Activated T-helper 1 cell treated with anti-CD3 and anti-CD28 coated beads, Interleukin-12 subunit alpha, Interleukin-12 subunit beta, Interleukin-2, Interleukin-4 antibody, amounts not matched to agents 30 ng/mL and 10 ng/mL and 1 ng/mL, durations not matched to agents 14 hours and 24 hours and 36 hours (primary cell): ENCODE measurements at regions of chr11 and their contacts with region 1.

Region 1: GRCh38 chr11:19076744-19077589 is 16.4 kb upstream of the MRGPRX2 start:
- DNase-seq: peak; percentile 49
- H3K4me3 Mint-ChIP-seq: no peak overlapping the region
- H3K27ac Mint-ChIP-seq: no peak overlapping the region
- H3K4me1 Mint-ChIP-seq: no peaks in the 10 kb centered on the region
- H3K27me3 Mint-ChIP-seq: peaks cover 9% of the 10 kb centered on the region

Region 2: DNA sequence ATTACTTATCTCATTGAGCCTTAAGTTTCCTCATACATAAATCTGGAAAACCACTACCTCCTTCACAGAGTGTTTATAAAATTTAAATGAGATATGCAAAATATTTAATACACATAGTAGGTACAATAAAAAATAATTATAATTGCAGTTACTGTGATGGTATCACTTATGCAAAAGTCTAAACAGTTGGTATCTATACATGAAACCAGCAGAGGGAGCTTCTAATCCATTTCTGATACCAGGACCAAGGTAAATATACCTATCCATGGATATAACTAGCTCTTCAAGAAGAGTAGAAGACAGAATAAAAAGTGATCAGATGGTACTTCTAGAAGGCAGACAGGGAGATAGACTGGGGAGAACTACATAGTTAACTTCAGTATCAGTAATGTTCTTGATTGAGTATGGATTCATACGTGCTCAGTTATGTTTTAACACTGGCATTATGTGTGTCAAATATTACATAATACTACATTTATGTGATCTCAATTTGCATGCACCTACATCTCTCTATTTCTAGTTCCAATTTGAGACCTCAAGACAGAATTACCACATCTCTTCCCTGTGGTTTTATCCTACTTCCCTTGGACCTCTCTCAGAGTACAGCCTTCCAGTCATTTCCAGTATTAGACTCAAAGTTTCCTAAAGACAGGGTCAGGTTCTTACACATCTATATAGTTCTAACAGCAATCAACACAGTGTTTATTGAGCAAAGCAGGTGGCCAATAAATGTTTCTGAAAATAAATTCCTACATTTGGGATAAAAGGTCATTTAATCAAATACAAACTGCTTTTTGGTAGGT is 536.6 kb before region 1 on chr11:
- intact Hi-C with region 1: no loop called
- DNase-seq: no peak
- H3K4me3 Mint-ChIP-seq: no peak overlapping the region
- H3K27ac Mint-ChIP-seq: no peak overlapping the region
- H3K4me1 Mint-ChIP-seq: peaks cover 8% of the 10 kb centered on the region
- H3K27me3 Mint-ChIP-seq: no peaks in the 10 kb centered on the region

Region 3: DNA sequence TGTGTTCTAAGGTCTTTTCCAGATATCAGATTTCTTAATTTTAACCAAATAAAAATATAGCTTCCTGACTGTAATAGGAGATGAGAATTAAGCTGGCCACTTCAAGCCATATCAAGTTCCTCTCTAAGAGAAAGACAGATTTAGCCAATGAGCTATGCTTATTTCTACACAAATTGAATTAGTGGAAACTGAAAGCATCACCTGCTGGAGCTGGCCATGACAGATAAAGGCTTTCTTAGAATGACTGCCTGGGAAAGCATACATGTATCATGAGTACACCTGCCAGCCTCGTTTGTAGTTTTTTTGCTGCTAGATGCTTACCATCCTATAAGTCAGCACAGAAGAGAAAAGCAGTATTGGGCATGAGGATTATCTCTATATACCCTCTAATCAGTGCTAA is 1136.8 kb after region 1 on chr11:
- intact Hi-C with region 1: loop called (anchors 5 kb)
- DNase-seq: no peak
- H3K4me3 Mint-ChIP-seq: no peak overlapping the region
- H3K27ac Mint-ChIP-seq: no peak overlapping the region
- H3K4me1 Mint-ChIP-seq: no peaks in the 10 kb centered on the region
- H3K27me3 Mint-ChIP-seq: peaks cover 18% of the 10 kb centered on the region